ENCODE measurements at regions of chr17 and their contacts with region 1.

Region 1: GRCh38 chr17:67602956-67603355 is 114.8 kb upstream of the NOL11 start:
- H3K4me3 Mint-ChIP-seq: no peak overlapping the region
- H3K27ac Mint-ChIP-seq: no peak overlapping the region
- H3K4me1 Mint-ChIP-seq: peaks cover 10% of the 10 kb centered on the region
- H3K27me3 Mint-ChIP-seq: no peaks in the 10 kb centered on the region

Region 2: GRCh38 chr17:67376737-67377487 is 226.0 kb before region 1 on chr17 and contains the start of gene PITPNC1:
- intact Hi-C with region 1: loop called (anchors 10 kb)
- H3K4me3 Mint-ChIP-seq: peak within 1 kb of the TSS; percentile 96
- H3K27ac Mint-ChIP-seq: peak within 1 kb of the TSS; percentile 91
- H3K4me1 Mint-ChIP-seq: peaks cover 26% of the 10 kb centered on the region
- H3K27me3 Mint-ChIP-seq: peaks cover 7% of the 10 kb centered on the region

Region 3: GRCh38 chr17:67509390-67510289 is 93.3 kb before region 1 on chr17:
- intact Hi-C with region 1: loop called (anchors 10 kb)
- H3K4me3 Mint-ChIP-seq: peak overlapping the region; percentile 73
- H3K27ac Mint-ChIP-seq: peak overlapping the region; percentile 88
- H3K4me1 Mint-ChIP-seq: peaks cover 15% of the 10 kb centered on the region
- H3K27me3 Mint-ChIP-seq: no peaks in the 10 kb centered on the region

Region 4: GRCh38 chr17:67544364-67544955 is 58.5 kb before region 1 on chr17:
- intact Hi-C with region 1: no loop called
- H3K4me3 Mint-ChIP-seq: no peak overlapping the region
- H3K27ac Mint-ChIP-seq: no peak overlapping the region
- H3K4me1 Mint-ChIP-seq: peaks cover 33% of the 10 kb centered on the region
- H3K27me3 Mint-ChIP-seq: peaks cover 17% of the 10 kb centered on the region

Region 5: DNA sequence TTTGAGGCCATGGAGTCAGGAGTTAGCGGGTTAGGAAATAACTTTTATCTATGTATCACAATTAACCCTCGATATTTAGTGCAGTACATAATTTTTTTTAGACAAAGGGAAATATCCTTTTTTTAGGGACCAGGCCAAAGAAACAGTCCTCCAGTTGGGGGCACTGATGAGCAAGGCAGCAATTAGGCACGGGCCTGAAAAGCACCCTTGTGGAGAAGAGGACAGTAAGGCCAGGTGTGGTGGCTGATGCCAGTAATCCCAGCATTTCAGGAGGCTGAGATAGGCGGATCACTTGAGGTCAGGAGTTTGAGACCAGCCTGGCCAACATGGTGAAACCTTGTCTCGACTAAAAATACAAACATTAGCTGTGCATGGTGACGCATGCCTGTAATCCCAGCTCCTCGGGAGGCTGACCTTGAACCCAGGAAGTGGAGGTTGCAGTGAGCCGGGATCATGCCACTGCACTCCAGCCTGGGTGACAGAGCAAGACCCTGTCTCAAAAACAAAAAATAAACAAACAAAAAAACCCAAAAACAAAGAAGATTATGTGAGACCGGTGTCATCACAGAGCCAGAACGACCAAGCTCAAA is 43.5 kb before region 1 on chr17:
- intact Hi-C with region 1: loop called (anchors 2 kb)
- H3K4me3 Mint-ChIP-seq: no peak overlapping the region
- H3K27ac Mint-ChIP-seq: peak overlapping the region; percentile 50
- H3K4me1 Mint-ChIP-seq: peaks cover 25% of the 10 kb centered on the region
- H3K27me3 Mint-ChIP-seq: peaks cover 2% of the 10 kb centered on the region

Region 6: GRCh38 chr17:67779098-67779672 is 176.2 kb after region 1 on chr17:
- intact Hi-C with region 1: no loop called
- H3K4me3 Mint-ChIP-seq: no peak overlapping the region
- H3K27ac Mint-ChIP-seq: no peak overlapping the region
- H3K4me1 Mint-ChIP-seq: no peaks in the 10 kb centered on the region
- H3K27me3 Mint-ChIP-seq: no peaks in the 10 kb centered on the region